Thyroid gland (tissue), 4 donors: ENCODE measurements at regions of chr9 and their contacts with region 1.

Region 1: GRCh38 chr9:34328987-34329832 is at the starts of genes KIF24 and NUDT2:
- DNase-seq: peak; percentile 98
- H3K4me3 ChIP-seq: peak within 1 kb of the TSS; percentile 52 to 61 (median 54)
- H3K27ac ChIP-seq: peak within 1 kb of the TSS; percentile 77 to 95 (median 94)
- H3K4me1 ChIP-seq: peaks cover 18 to 23% of the 10 kb centered on the region in 2 donors
- H3K27me3 ChIP-seq: no peaks in the 10 kb centered on the region
- CTCF ChIP-seq: peak in 1 of 6 experiments; percentile 27
- POLR2A ChIP-seq: peak in 1 of 2 donors; percentile 75
- total RNA-seq, gene KIF24: 1.7 to 7.8 (median 4.6) TPM
- total RNA-seq, gene NUDT2: 3.0 to 8.7 (median 4.8) TPM

Region 2: DNA sequence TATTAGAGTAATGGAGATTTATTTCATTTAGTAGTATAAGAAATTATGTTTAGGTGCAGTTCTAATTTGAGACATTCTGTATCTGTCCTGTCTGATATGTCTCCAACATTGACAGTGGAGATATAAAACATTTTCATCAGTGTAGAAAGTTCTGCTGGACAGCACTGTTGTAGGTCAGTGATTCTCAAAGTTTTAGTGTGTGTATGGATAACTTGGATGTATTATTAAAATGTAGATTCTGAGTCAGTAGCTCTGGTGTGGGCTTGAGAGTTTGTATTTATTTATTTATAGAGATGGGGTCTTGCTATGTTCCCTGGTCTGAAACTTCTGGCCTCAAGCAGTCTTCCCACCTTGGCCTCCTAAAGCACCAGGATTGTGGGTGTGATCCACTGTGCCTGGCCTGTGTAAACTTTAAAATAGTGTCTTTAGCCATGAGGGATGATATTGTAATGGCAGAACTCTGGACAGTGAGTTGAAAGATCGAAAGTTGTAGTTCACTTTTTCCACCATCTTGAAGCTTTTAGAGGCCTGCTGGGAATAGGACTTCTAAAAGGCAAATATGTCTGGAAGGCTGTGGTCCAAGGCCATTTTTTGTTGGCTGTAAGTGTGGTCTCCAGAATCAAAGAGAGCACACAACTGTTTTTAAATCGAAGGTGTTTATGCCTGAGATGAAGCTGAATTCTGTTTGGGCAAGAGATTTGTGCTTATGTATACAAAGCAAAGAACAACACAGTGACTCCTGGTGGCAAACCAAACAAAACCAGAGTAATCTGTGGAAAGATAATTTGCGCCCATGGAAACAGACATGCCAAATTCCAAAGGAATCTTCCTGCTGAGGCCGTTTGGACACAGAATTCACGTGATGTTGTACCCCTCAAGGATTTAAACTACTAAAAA is 138.0 kb before region 1 on chr9:
- intact Hi-C with region 1: loop called (anchors 10 kb)
- DNase-seq: no peak
- H3K4me3 ChIP-seq: no peak overlapping the region
- H3K27ac ChIP-seq: peak overlapping the region in 2 of 3 donors; percentile 31 to 32
- H3K4me1 ChIP-seq: peaks cover 40 to 50% of the 10 kb centered on the region in 2 donors
- H3K27me3 ChIP-seq: no peaks in the 10 kb centered on the region
- CTCF ChIP-seq: peak in 4 of 6 experiments; percentile 16 to 43 (median 37)
- POLR2A ChIP-seq: no peak

Region 3: GRCh38 chr9:34376596-34377403 is 47.6 kb after region 1 on chr9 and contains the start of gene MYORG:
- intact Hi-C with region 1: loop called (anchors 5 kb)
- DNase-seq: peak; percentile 99
- H3K4me3 ChIP-seq: peak within 1 kb of the TSS; percentile 0 to 55 (median 30)
- H3K27ac ChIP-seq: peak within 1 kb of the TSS; percentile 28 to 73 (median 57)
- H3K4me1 ChIP-seq: peaks cover 20 to 27% of the 10 kb centered on the region in 2 donors
- H3K27me3 ChIP-seq: no peaks in the 10 kb centered on the region
- CTCF ChIP-seq: no peak
- POLR2A ChIP-seq: peak; percentile 12 to 86
- total RNA-seq, gene MYORG: 3.2 to 9.2 (median 6.0) TPM

Region 4: GRCh38 chr9:34500623-34501267 is 171.5 kb after region 1 on chr9:
- intact Hi-C with region 1: loop called (anchors 10 kb)
- DNase-seq: peak; percentile 52 to 59
- H3K4me3 ChIP-seq: no peak overlapping the region
- H3K27ac ChIP-seq: no peak overlapping the region
- H3K4me1 ChIP-seq: peaks cover 9 to 14% of the 10 kb centered on the region in 2 donors
- H3K27me3 ChIP-seq: no peaks in the 10 kb centered on the region
- CTCF ChIP-seq: peak; percentile 84 to 98 (median 90)
- POLR2A ChIP-seq: no peak

Region 5: DNA sequence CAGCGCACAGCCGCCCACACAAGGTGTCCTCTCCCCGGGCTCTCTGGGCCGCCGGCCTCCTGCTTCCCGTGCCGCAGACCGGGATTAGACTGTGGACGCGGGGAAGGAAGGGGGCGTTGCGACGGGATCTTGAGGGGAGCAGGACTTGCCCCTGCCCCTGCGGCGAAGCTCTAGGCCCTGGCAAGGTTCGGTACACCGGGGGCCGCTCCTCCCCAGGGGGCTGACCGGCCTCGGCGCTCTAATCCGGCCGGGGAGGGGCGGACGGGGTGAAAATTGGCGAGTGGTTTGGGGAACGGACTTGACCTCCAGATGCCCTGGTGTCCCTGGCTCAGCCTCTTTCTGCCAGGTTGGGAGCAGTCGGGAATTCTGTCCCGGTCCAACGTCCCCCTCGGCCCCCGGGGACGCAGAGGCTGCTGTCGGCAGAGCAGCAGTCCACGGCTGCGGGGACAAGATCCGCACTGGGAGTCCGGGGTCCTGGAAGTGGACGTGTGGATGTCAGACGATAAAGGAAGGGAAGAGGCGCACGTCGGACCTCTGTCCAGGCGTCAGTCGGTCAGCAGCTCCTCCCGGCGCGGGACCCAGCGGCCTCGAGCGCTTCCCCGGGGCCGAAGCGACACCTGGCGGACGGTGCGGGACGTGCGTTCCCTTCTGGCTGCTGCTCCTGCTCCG is 262.2 kb after region 1 on chr9:
- intact Hi-C with region 1: loop called (anchors 10 kb)
- DNase-seq: peak; percentile 80 to 82
- H3K4me3 ChIP-seq: peak overlapping the region in 1 of 3 donors; percentile 18
- H3K27ac ChIP-seq: peak overlapping the region; percentile 34 to 62 (median 50)
- H3K4me1 ChIP-seq: peaks cover 12 to 39% of the 10 kb centered on the region in 2 donors
- H3K27me3 ChIP-seq: no peaks in the 10 kb centered on the region
- CTCF ChIP-seq: peak; percentile 63 to 93 (median 85)
- POLR2A ChIP-seq: no peak